A673 (cell line): ENCODE measurements at regions of chr12 and their contacts with region 1.

Region 1: GRCh38 chr12:33560713-33561112 is 121.1 kb upstream of the SYT10 start:
- DNase-seq: no peak
- H3K4me3 ChIP-seq: no peak overlapping the region
- H3K27ac ChIP-seq: no peak overlapping the region
- H3K4me1 ChIP-seq: no peaks in the 10 kb centered on the region
- H3K27me3 ChIP-seq: no peaks in the 10 kb centered on the region
- CTCF ChIP-seq: no peak

Region 2: DNA sequence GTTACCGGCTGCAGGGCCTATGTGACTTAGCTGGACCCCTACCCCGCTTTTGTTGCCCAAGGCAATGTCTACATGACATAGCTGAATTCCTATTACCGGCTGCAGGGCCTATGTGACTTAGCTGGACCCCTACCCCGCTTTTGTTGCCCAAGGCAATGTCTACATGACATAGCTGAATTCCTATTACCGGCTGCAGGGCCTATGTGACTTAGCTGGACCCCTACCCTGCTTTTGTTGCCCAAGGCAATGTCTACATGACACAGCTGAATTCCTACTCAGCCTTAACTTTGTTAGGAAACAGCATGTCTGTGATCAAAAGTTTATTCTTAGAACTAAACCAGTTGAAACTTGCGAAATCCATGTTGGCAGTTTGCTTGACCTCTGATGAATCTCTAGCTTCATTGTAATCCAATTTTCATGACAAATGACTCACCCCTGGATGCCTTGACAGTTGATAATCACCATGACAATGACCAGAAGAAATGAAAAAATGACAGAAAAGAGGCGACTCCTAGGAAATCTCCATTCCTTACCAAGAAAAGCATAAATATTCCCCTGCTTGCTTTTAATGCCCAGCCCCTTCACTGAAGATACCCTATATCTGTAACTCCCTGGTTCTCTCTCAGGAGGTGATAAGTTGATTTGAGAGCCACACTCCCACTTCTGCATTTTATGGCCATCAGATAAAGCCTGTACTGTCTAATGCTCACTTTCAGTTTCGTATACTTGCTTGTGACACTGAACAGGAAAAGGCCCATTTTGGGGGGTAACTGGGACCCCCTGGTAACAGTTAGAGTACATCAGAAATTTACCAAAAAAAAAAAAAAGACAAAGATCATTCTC is 27.4 kb after region 1 on chr12:
- CTCF ChIA-PET with region 1: no interaction called
- POLR2A ChIA-PET with region 1: no interaction called
- intact Hi-C with region 1: no loop called
- DNase-seq: peak; percentile 11
- H3K4me3 ChIP-seq: no peak overlapping the region
- H3K27ac ChIP-seq: no peak overlapping the region
- H3K4me1 ChIP-seq: no peaks in the 10 kb centered on the region
- H3K27me3 ChIP-seq: no peaks in the 10 kb centered on the region
- CTCF ChIP-seq: no peak

Region 3: DNA sequence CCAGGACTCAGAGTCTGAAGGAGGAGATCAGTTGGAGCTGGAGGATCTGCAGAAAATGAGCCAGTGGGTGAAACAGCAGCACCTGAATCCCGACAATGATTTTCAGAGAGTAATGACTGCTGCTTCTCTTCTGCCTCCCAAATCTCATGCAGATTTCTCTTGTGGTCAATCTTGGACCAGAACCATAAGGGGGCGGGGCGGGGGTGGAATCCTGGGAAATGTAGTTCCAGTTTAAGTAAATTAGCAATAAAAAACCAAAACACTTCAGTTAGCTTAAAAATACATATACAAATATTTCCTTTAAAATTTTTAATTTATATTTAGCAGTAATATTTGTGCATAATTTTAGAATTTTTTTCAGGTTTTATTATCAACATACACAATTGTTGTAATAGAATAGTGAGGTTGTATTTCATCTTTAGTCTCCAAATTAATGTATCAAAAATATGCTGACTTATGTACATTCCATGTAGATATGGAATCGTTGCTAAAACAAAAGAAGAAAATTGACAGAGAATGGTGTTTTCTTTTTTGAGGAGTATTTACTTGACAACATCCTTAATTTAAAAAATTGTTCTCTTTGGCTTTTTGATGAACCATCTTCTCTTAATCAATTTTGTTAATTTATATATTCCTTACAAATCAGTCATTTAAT is 102.4 kb after region 1 on chr12:
- CTCF ChIA-PET with region 1: no interaction called
- POLR2A ChIA-PET with region 1: no interaction called
- intact Hi-C with region 1: no loop called
- DNase-seq: no peak
- H3K4me3 ChIP-seq: no peak overlapping the region
- H3K27ac ChIP-seq: no peak overlapping the region
- H3K4me1 ChIP-seq: no peaks in the 10 kb centered on the region
- H3K27me3 ChIP-seq: no peaks in the 10 kb centered on the region
- CTCF ChIP-seq: no peak

Region 4: DNA sequence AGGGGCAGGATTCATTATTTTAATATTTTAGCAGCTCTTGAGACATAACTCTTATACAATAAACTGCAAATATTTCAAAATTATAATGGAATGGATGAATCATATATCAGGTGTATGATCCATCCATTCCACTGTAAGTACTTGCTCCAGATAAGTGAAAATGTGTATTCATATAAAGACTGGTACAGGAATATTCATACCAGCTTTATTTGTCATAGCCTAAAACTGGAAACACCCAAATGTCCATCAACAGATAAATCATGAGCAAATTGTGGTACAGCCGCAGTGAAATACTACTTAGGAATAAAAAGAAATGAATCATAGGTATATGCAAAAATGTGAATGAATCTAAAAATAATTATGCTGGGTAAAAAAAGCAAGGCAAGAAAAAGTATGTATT is 142.5 kb after region 1 on chr12:
- CTCF ChIA-PET with region 1: no interaction called
- POLR2A ChIA-PET with region 1: no interaction called
- intact Hi-C with region 1: no loop called
- DNase-seq: no peak
- H3K4me3 ChIP-seq: no peak overlapping the region
- H3K27ac ChIP-seq: no peak overlapping the region
- H3K4me1 ChIP-seq: no peaks in the 10 kb centered on the region
- H3K27me3 ChIP-seq: no peaks in the 10 kb centered on the region
- CTCF ChIP-seq: no peak

Region 5: GRCh38 chr12:33839220-33839619 is 278.5 kb after region 1 on chr12:
- CTCF ChIA-PET with region 1: no interaction called
- POLR2A ChIA-PET with region 1: no interaction called
- intact Hi-C with region 1: no loop called
- DNase-seq: no peak
- H3K4me3 ChIP-seq: no peak overlapping the region
- H3K27ac ChIP-seq: no peak overlapping the region
- H3K4me1 ChIP-seq: no peaks in the 10 kb centered on the region
- H3K27me3 ChIP-seq: no peaks in the 10 kb centered on the region
- CTCF ChIP-seq: no peak

Region 6: GRCh38 chr12:34233618-34234017 is 672.9 kb after region 1 on chr12:
- CTCF ChIA-PET with region 1: no interaction called
- POLR2A ChIA-PET with region 1: no interaction called
- intact Hi-C with region 1: loop called (anchors 10 kb)
- DNase-seq: no peak
- H3K4me3 ChIP-seq: no peak overlapping the region
- H3K27ac ChIP-seq: no peak overlapping the region
- H3K4me1 ChIP-seq: no peaks in the 10 kb centered on the region
- H3K27me3 ChIP-seq: no peaks in the 10 kb centered on the region
- CTCF ChIP-seq: no peak